Heart left ventricle (tissue), 16 donors: ENCODE measurements at regions of chr9 and their contacts with region 1.

Region 1: GRCh38 chr9:104747558-104748358 is at the start of gene NIPSNAP3A:
- DNase-seq: peak; percentile 89 to 94 (median 89)
- ATAC-seq: peak; percentile 93 to 97 (median 96)
- H3K4me3 ChIP-seq: peak within 1 kb of the TSS; percentile 66 to 89 (median 83)
- H3K27ac ChIP-seq: peak within 1 kb of the TSS; percentile 77 to 95 (median 90)
- H3K4me1 ChIP-seq: peaks cover 0 to 20% (median 9%) of the 10 kb centered on the region in 12 donors
- H3K27me3 ChIP-seq: no peaks in the 10 kb centered on the region
- CTCF ChIP-seq: no peak
- POLR2A ChIP-seq: peak in 1 of 2 donors; percentile 60
- total RNA-seq, gene NIPSNAP3A: 14.9 to 37.0 (median 22.9) TPM

Region 2: GRCh38 chr9:103397868-103398600 is 1349.7 kb before region 1 on chr9:
- intact Hi-C with region 1: loop called in 2 of 10 experiments (anchors 10 kb)
- DNase-seq: peak in 2 of 5 donors; percentile 11 to 30
- ATAC-seq: peak in 3 of 4 donors; percentile 24 to 58 (median 50)
- H3K4me3 ChIP-seq: no peak overlapping the region
- H3K27ac ChIP-seq: no peak overlapping the region
- H3K4me1 ChIP-seq: no peaks in the 10 kb centered on the region
- H3K27me3 ChIP-seq: no peaks in the 10 kb centered on the region
- CTCF ChIP-seq: peak; percentile 39 to 66 (median 54)
- POLR2A ChIP-seq: no peak

Region 3: GRCh38 chr9:104093647-104094533 is 653.9 kb before region 1 on chr9 and contains the start of gene SMC2:
- intact Hi-C with region 1: loop called in 2 of 10 experiments (anchors 10 kb)
- DNase-seq: peak; percentile 92 to 96 (median 95)
- ATAC-seq: peak; percentile 95 to 98 (median 97)
- H3K4me3 ChIP-seq: peak within 1 kb of the TSS; percentile 45 to 89 (median 68)
- H3K27ac ChIP-seq: peak within 1 kb of the TSS; percentile 82 to 99 (median 94)
- H3K4me1 ChIP-seq: peaks cover 2 to 38% (median 19%) of the 10 kb centered on the region in 12 donors
- H3K27me3 ChIP-seq: no peaks in the 10 kb centered on the region
- CTCF ChIP-seq: no peak
- POLR2A ChIP-seq: peak in 1 of 2 donors; percentile 79
- total RNA-seq, gene SMC2: 9.0 to 22.9 (median 16.2) TPM

Region 4: DNA sequence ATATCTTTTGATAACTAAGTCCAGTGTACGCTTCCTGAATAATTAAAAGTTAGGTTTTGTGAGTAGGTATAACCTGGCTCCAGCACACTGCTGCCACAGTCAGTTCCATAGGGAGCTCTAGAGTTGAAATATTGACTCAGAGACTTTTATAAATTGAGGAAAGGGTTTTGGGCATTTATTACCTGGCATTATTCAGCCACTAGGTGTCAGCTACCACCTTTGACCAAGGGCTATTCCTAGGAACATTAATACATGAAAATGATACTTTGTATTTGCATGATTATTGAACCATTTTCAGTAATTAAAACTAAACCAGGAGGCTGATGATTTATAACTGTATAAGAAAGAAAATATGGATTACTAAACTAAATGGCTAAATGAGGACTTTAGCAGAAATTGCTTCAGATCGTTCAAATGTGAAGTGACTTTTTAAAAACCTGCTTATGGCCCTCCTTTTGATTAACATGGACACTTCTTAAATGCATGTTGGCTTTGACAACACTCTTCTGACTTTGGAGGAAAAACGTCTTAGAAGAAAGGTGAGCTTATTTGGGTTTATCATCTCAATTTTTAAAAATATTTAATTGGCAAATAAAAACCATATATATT is 570.7 kb before region 1 on chr9:
- intact Hi-C with region 1: loop called in 1 of 10 experiments (anchors 5 kb)
- DNase-seq: no peak
- ATAC-seq: no peak
- H3K4me3 ChIP-seq: no peak overlapping the region
- H3K27ac ChIP-seq: no peak overlapping the region
- H3K4me1 ChIP-seq: no peaks in the 10 kb centered on the region
- H3K27me3 ChIP-seq: no peaks in the 10 kb centered on the region
- CTCF ChIP-seq: peak in 9 of 12 donors; percentile 10 to 51 (median 34)
- POLR2A ChIP-seq: no peak

Region 5: DNA sequence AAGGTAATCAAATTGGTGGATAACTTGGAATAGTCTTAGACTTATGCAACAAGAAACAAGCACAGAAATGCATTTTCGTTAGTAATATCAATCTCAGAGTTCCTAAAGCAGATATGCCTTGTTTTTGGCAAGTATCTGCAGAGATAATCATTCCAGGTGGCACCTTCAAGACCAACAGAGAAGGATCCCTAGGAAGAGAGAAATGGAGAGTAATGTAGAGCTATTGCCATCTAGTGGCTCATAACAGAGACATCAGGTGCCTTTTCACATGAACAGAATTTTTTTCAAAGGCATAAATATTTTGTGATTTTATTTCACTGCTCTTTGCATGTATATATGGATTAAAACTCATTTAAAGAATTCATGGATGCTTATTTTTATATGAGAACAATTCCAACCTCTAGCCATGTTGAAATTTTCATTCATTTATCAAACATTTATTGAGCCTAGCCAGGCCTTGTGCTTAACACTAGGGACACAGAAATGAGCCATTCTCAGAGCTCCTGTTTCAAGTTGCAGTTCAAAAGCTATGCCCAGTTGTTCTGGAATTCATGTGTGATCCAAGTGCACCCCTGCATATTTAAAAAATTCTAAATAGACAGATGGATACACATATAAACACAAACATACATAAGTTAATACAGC is 361.2 kb before region 1 on chr9:
- intact Hi-C with region 1: loop called in 1 of 10 experiments (anchors 5 kb)
- DNase-seq: no peak
- ATAC-seq: no peak
- H3K4me3 ChIP-seq: no peak overlapping the region
- H3K27ac ChIP-seq: no peak overlapping the region
- H3K4me1 ChIP-seq: peaks cover 0 to 2% (median 0%) of the 10 kb centered on the region in 12 donors
- H3K27me3 ChIP-seq: peaks cover 0 to 6% (median 0%) of the 10 kb centered on the region in 9 donors
- CTCF ChIP-seq: peak; percentile 43 to 75 (median 63)
- POLR2A ChIP-seq: no peak

Region 6: GRCh38 chr9:105557771-105558610 is 810.2 kb after region 1 on chr9 and contains the start of gene FKTN:
- intact Hi-C with region 1: loop called in 1 of 10 experiments (anchors 5 kb)
- DNase-seq: peak; percentile 89 to 94 (median 92)
- ATAC-seq: peak; percentile 90 to 98 (median 98)
- H3K4me3 ChIP-seq: peak within 1 kb of the TSS; percentile 62 to 97 (median 82)
- H3K27ac ChIP-seq: peak within 1 kb of the TSS; percentile 42 to 87 (median 74)
- H3K4me1 ChIP-seq: peaks cover 0 to 13% (median 8%) of the 10 kb centered on the region in 12 donors
- H3K27me3 ChIP-seq: no peaks in the 10 kb centered on the region
- CTCF ChIP-seq: no peak
- POLR2A ChIP-seq: peak in 1 of 2 donors; percentile 40
- total RNA-seq, gene FKTN: 3.5 to 12.9 (median 7.2) TPM